ENCODE measurements at regions of chr3 and their contacts with region 1.

Region 1: GRCh38 chr3:156507285-156507684 is 47.6 kb downstream of the SSR3 start:
- DNase-seq: no peak
- H3K4me3 Mint-ChIP-seq: no peak overlapping the region
- H3K27ac Mint-ChIP-seq: no peak overlapping the region
- H3K4me1 Mint-ChIP-seq: peaks cover 17% of the 10 kb centered on the region
- H3K27me3 Mint-ChIP-seq: peaks cover 45% of the 10 kb centered on the region

Region 2: GRCh38 chr3:156483961-156484787 is 23.1 kb before region 1 on chr3:
- CTCF ChIA-PET with region 1: interaction called, 10 read pairs
- POLR2A ChIA-PET with region 1: no interaction called
- DNase-seq: peak; percentile 70
- H3K4me3 Mint-ChIP-seq: peak overlapping the region; percentile 65
- H3K27ac Mint-ChIP-seq: peak overlapping the region; percentile 94
- H3K4me1 Mint-ChIP-seq: peaks cover 45% of the 10 kb centered on the region
- H3K27me3 Mint-ChIP-seq: peaks cover 5% of the 10 kb centered on the region

Measured in activated CD4-positive, alpha-beta T cell treated with anti-CD3 and anti-CD28 coated beads, Interleukin-2, amount 10 ng/mL, durations not matched to agents 7 days and 5 days (primary cell).